GM12878 (cell line): ENCODE measurements at regions of chr10 and their contacts with region 1.

Region 1: GRCh38 chr10:71974489-71975021 is 10.4 kb downstream of the CHST3 start:
- DNase-seq: no peak
- ATAC-seq: peak; percentile 89
- H3K4me3 ChIP-seq: no peak overlapping the region
- H3K27ac ChIP-seq: no peak overlapping the region
- H3K4me1 ChIP-seq: peaks cover 22% of the 10 kb centered on the region
- H3K27me3 ChIP-seq: no peaks in the 10 kb centered on the region; a peak in 1 of 4 replicates
- CTCF ChIP-seq: no peak
- EP300 ChIP-seq: no peak
- POLR2A ChIP-seq: no peak
- RAD21 ChIP-seq: no peak

Region 2: GRCh38 chr10:71921324-71922027 is 53.1 kb before region 1 on chr10:
- CTCF ChIA-PET with region 1: no interaction called
- POLR2A ChIA-PET with region 1: no interaction called
- RAD21 ChIA-PET with region 1: no interaction called
- SMC1A ChIA-PET with region 1: no interaction called
- in situ Hi-C with region 1: no loop called
- intact Hi-C with region 1: no loop called
- DNase-seq: no peak
- ATAC-seq: no peak
- H3K4me3 ChIP-seq: no peak overlapping the region
- H3K27ac ChIP-seq: no peak overlapping the region
- H3K4me1 ChIP-seq: no peaks in the 10 kb centered on the region
- H3K27me3 ChIP-seq: peaks cover 0 to 1% of the 10 kb centered on the region in 2 experiments; a peak in 2 of 4 replicates
- CTCF ChIP-seq: no peak
- EP300 ChIP-seq: no peak
- POLR2A ChIP-seq: no peak
- RAD21 ChIP-seq: no peak

Region 3: GRCh38 chr10:71985542-71986250 is 11.1 kb after region 1 on chr10:
- CTCF ChIA-PET with region 1: interaction called, 10 read pairs
- POLR2A ChIA-PET with region 1: interaction called, 6 read pairs
- RAD21 ChIA-PET with region 1: interaction called, 12 read pairs
- SMC1A ChIA-PET with region 1: interaction called, 17 read pairs
- in situ Hi-C with region 1: no loop called
- intact Hi-C with region 1: no loop called
- DNase-seq: peak; percentile 73
- ATAC-seq: peak; percentile 83
- H3K4me3 ChIP-seq: no peak overlapping the region
- H3K27ac ChIP-seq: peak overlapping the region; percentile 88
- H3K4me1 ChIP-seq: peaks cover 40% of the 10 kb centered on the region
- H3K27me3 ChIP-seq: no peaks in the 10 kb centered on the region
- CTCF ChIP-seq: no peak
- EP300 ChIP-seq: 0 out of 4 replicates have a peak, but pooled peaks have one; percentile 41 to 55
- POLR2A ChIP-seq: no peak
- RAD21 ChIP-seq: no peak